ENCODE measurements at regions of chr11 and their contacts with region 1.

Region 1: GRCh38 chr11:12087075-12088004 is 23.1 kb upstream of the MICAL2 start:
- DNase-seq: no peak

Region 2: DNA sequence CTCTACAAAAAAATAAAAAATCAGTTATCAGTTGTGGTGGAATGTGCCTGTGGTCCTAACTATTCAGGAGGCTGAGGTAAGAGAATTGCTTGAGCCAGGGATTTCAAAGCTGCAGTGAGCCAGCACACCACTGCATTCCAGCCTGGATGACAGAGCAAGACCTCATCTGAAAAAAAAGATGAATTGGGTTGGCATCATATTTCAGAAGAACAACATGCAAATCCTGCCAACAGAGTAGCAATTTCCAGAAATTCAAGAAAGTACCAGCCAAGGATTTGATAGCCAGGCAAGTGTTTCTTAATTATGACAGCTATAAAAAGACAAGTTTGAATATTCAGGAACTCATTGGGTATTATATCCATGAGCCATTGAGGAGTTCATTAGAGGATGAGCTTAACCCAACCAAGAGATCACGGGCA is 170.3 kb before region 1 on chr11:
- intact Hi-C with region 1: no loop called
- DNase-seq: no peak

Region 3: GRCh38 chr11:12224537-12224893 is 137.2 kb after region 1 on chr11:
- intact Hi-C with region 1: no loop called
- DNase-seq: peak in 5 of 10 donors; percentile 35 to 91 (median 50)

Region 4: DNA sequence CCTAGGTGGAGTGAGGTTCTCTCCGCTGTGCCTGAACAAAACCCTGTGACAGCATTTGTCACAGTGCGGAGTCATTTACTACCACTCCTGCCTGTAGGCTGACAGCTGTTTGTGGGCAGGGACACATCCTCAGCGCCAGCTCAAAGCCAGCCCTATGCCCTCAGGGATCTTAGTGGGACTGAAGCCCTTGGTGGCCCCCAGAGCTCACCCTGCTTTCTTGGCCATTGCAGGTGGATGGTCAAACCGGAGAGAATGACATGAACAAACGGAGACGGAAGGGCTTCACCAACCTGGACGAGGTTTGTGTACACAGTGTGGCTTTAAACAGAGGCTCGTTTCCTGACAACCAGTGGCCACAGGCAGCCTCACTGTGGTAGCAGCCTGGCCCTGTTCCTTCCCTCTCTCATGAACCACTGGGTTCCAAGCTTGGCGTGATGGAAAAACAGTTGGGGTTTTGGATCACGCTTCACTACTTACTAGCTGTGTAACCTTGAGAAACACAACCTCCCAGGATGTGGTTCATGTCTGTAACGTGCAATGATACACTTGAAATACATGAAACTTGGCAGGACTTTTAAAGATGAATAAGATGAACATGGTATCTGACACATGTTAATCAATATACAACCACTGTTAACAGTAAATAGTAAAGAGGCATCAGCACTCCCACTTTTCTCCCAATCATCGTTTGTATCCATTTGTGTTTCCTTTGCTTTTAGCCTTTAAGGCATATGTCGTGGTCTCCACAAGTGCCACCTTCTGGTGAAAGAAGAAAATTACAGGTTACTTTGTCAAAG is 148.8 kb after region 1 on chr11:
- intact Hi-C with region 1: loop called (anchors 2 kb)
- DNase-seq: peak in 1 of 10 donors; percentile 78

Region 5: GRCh38 chr11:12281571-12282478 is 194.5 kb after region 1 on chr11:
- intact Hi-C with region 1: loop called (anchors 2 kb)
- DNase-seq: peak; percentile 83 to 98 (median 92)

Measured in posterior cingulate gyrus (tissue), 11 donors.